ENCODE measurements at regions of chr11 and their contacts with region 1.

Region 1: DNA sequence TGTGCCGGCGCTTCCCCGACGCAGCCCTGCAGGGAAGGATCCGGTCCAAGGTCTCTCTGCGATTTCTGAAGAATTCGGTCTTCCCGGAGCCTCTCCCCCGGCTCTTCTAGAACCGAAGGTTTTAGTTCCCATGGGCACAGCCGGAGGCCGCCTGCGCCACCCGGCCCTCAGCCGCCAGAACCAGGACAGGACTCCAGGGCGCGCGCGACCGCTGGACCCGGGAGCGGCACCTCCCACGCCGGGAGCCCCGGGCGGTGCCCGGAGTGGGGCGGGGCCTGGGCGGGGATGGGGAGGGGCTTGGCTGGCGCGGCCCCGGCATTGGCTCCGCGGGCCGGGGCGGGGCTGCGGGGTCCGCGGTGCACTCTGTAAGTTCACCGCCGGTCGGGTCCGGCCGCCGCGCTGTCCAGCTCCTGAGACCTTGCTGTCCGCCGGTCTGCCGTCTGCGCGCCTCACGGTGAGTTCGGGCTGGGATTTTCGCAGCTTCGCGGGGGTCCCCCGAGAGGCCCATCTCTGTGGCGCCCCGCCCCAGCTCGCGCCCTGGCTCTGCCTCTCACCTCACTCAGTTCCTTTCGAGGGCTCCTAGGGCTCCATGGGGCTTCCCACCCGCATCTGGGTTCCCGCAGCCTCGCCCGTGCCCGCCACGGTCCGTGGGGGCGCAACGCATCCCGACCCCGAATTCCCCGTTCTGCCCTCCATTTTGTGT is at the start of gene CDC42EP2:
- DNase-seq: peak; percentile 97
- H3K4me3 ChIP-seq: peak within 1 kb of the TSS; percentile 85 to 94
- H3K27ac ChIP-seq: peak within 1 kb of the TSS; percentile 65 to 80
- H3K4me1 ChIP-seq: peaks cover 20 to 38% of the 10 kb centered on the region in 2 experiments; a peak in 2 of 4 replicates
- H3K27me3 ChIP-seq: no peaks in the 10 kb centered on the region
- CTCF ChIP-seq: no peak
- EP300 ChIP-seq: no peak
- RAD21 ChIP-seq: no peak
- polyA plus RNA-seq, gene CDC42EP2: 5.1 and 8.1 TPM in 2 replicates

Region 2: GRCh38 chr11:65204646-65205601 is 109.7 kb before region 1 on chr11:
- CTCF ChIA-PET with region 1: interaction called, 11 read pairs
- POLR2A ChIA-PET with region 1: no interaction called
- DNase-seq: peak; percentile 92
- H3K4me3 ChIP-seq: no peak overlapping the region
- H3K27ac ChIP-seq: no peak overlapping the region
- H3K4me1 ChIP-seq: no peaks in the 10 kb centered on the region
- H3K27me3 ChIP-seq: no peaks in the 10 kb centered on the region
- CTCF ChIP-seq: peak; percentile 85
- EP300 ChIP-seq: no peak
- RAD21 ChIP-seq: peak; percentile 70

Region 3: GRCh38 chr11:65225279-65226102 is 89.2 kb before region 1 on chr11:
- CTCF ChIA-PET with region 1: interaction called, 26 read pairs
- POLR2A ChIA-PET with region 1: interaction called, 3 read pairs
- DNase-seq: peak; percentile 87
- H3K4me3 ChIP-seq: peak overlapping the region; percentile 29 to 40; a peak in 3 of 4 replicates
- H3K27ac ChIP-seq: no peak overlapping the region
- H3K4me1 ChIP-seq: peaks cover 2 to 9% of the 10 kb centered on the region in 2 experiments; a peak in 2 of 4 replicates
- H3K27me3 ChIP-seq: no peaks in the 10 kb centered on the region
- CTCF ChIP-seq: peak; percentile 66
- EP300 ChIP-seq: no peak
- RAD21 ChIP-seq: peak; percentile 62

Region 4: DNA sequence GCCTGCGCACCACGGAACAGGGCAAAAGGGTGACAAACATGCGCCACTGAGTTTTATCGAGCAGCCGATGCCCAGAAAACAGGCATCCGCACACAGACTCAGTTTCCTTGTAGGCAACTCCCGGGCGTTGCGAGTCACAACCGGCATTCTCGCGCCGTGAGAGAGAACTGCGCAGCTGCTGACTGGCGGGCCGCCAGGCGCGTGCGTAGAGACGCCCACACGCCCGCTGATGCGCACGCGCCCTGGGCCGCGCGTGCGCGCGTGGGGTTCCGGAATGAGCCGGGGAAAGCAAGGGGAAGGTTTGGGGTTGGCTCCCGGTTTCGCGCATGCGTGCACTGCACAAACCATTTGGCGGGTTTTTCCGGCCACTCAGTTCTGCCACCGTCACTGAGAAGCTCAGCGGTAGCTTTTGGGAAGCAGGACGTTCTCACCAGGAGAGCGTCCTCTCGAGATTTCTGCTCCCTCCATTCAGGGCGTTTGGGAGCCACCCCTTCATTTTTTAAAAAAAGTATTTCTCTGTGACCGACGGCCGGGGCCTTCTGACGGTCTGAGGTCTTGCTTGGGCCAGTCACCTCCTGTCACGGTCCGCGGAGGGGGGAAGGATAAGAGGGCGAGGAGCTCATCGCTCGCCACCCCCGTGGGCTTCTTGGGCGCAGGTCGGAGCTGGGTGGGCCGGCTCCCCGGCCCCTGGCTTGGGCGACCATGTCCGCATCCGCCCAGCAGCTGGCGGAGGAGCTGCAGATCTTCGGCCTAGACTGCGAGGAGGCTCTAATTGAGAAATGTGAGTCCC is 52.9 kb before region 1 on chr11 and contains the start of gene POLA2:
- CTCF ChIA-PET with region 1: interaction called, 1,118 read pairs
- POLR2A ChIA-PET with region 1: interaction called, 3 read pairs
- DNase-seq: peak; percentile 100
- H3K4me3 ChIP-seq: peak within 1 kb of the TSS; percentile 68 to 82
- H3K27ac ChIP-seq: peak within 1 kb of the TSS; percentile 65 to 84
- H3K4me1 ChIP-seq: peaks cover 0 to 12% of the 10 kb centered on the region in 2 experiments; a peak in 1 of 4 replicates
- H3K27me3 ChIP-seq: no peaks in the 10 kb centered on the region
- CTCF ChIP-seq: no peak
- EP300 ChIP-seq: no peak
- RAD21 ChIP-seq: no peak
- polyA plus RNA-seq, gene POLA2: 18.4 and 19.4 TPM in 2 replicates

Region 5: GRCh38 chr11:65274735-65275682 is 39.6 kb before region 1 on chr11:
- CTCF ChIA-PET with region 1: interaction called, 1,118 read pairs
- POLR2A ChIA-PET with region 1: interaction called, 26 read pairs
- DNase-seq: peak; percentile 76
- H3K4me3 ChIP-seq: no peak overlapping the region
- H3K27ac ChIP-seq: peak overlapping the region; percentile 36 to 59; a peak in 3 of 4 replicates
- H3K4me1 ChIP-seq: peaks cover 0 to 34% of the 10 kb centered on the region in 2 experiments; a peak in 3 of 4 replicates
- H3K27me3 ChIP-seq: no peaks in the 10 kb centered on the region
- CTCF ChIP-seq: peak; percentile 87
- EP300 ChIP-seq: peak in 1 of 2 experiments; percentile 53; a peak in 1 of 4 replicates
- RAD21 ChIP-seq: peak; percentile 99

Region 6: GRCh38 chr11:65290448-65291165 is 24.0 kb before region 1 on chr11:
- CTCF ChIA-PET with region 1: interaction called, 1,118 read pairs
- POLR2A ChIA-PET with region 1: interaction called, 10 read pairs
- DNase-seq: no peak
- H3K4me3 ChIP-seq: no peak overlapping the region
- H3K27ac ChIP-seq: peak overlapping the region; percentile 18 to 24; a peak in 2 of 4 replicates
- H3K4me1 ChIP-seq: peaks cover 14 to 38% of the 10 kb centered on the region in 2 experiments; a peak in 3 of 4 replicates
- H3K27me3 ChIP-seq: no peaks in the 10 kb centered on the region
- CTCF ChIP-seq: no peak
- EP300 ChIP-seq: no peak
- RAD21 ChIP-seq: no peak

Region 7: DNA sequence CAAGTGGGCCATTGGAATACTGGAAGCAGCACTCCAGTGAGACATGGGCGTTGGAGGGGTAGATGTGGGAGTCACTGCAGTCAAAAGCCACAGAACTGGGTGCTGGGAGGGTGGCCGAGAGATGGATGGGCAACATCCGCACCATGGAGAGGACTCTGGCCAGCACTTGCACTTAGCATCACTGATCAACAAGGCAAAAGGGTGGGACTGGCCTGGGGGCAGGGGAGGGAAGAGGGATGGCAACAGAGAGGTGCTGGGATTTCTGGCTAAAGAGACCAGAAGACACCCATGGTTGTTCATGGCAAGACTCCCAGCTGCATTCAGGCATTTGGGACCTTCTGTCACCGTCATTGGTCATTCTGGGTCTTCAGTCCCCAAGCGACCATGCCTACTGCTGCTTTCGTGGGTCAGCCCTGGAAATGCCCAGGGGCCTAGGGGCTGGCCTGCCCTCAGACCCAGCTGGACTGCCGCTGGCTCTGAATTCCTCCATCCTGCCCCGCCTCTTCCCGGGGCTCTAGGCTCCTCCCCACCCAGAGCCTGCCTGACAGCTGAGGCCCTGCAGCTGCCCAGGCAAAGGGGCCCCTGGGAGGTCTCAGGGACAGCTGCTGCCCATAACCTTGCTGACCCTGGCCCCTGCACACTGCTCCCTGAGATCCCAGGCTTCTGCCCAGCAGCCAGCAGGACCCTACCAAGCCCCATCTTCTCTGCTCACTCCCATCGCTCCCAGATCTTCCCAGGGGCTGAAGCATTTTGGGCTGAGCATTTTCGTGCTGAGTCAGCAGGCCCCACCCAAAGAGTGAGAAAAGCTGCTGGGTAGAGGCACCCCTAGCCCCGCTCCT is 12.9 kb before region 1 on chr11:
- CTCF ChIA-PET with region 1: interaction called, 1,118 read pairs
- POLR2A ChIA-PET with region 1: interaction called, 6 read pairs
- DNase-seq: peak; percentile 51
- H3K4me3 ChIP-seq: no peak overlapping the region
- H3K27ac ChIP-seq: no peak overlapping the region; a peak in 1 of 4 replicates
- H3K4me1 ChIP-seq: peaks cover 0 to 35% of the 10 kb centered on the region in 2 experiments; a peak in 1 of 4 replicates
- H3K27me3 ChIP-seq: no peaks in the 10 kb centered on the region
- CTCF ChIP-seq: no peak
- EP300 ChIP-seq: no peak
- RAD21 ChIP-seq: no peak

Region 8: GRCh38 chr11:65363770-65364169 is 49.1 kb after region 1 on chr11:
- CTCF ChIA-PET with region 1: no interaction called
- POLR2A ChIA-PET with region 1: no interaction called
- DNase-seq: no peak
- H3K4me3 ChIP-seq: no peak overlapping the region
- H3K27ac ChIP-seq: no peak overlapping the region
- H3K4me1 ChIP-seq: no peaks in the 10 kb centered on the region; a peak in 1 of 4 replicates
- H3K27me3 ChIP-seq: no peaks in the 10 kb centered on the region
- CTCF ChIP-seq: no peak
- EP300 ChIP-seq: no peak
- RAD21 ChIP-seq: no peak

Measured in SK-N-SH (cell line).